HEK293 (cell line): ENCODE measurements at regions of chr6 and their contacts with region 1.

Region 1: DNA sequence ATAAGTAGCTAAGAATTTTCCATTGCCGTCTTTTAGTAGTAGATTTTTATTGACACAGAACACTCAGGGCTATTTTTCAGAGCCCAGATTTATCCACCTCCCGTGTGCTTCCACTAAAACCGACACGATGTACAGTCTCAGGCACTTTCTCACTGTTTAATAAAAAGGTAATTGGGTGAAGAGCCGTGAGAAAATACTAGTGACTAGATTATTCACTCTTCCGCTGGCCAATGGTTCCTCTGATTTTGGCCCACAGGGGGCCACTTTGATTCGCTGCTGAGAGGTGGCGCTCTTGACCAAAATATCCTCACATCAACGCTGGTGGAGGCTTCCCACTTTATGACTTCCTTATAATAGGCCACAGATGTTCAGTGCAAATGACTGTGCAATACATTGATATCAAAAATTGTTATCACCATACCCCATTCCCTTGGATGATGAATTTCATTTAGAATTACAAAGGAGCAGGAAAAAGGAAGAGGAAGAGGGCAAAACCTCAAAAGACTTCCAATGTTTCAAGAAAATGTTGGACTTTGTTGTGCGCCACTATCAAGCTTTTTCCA is 12.3 kb upstream of the HDDC2 start:
- H3K4me3 ChIP-seq: no peak overlapping the region
- H3K27ac ChIP-seq: no peak overlapping the region
- H3K4me1 ChIP-seq: no peaks in the 10 kb centered on the region
- CTCF ChIP-seq: peak; percentile 87

Region 2: DNA sequence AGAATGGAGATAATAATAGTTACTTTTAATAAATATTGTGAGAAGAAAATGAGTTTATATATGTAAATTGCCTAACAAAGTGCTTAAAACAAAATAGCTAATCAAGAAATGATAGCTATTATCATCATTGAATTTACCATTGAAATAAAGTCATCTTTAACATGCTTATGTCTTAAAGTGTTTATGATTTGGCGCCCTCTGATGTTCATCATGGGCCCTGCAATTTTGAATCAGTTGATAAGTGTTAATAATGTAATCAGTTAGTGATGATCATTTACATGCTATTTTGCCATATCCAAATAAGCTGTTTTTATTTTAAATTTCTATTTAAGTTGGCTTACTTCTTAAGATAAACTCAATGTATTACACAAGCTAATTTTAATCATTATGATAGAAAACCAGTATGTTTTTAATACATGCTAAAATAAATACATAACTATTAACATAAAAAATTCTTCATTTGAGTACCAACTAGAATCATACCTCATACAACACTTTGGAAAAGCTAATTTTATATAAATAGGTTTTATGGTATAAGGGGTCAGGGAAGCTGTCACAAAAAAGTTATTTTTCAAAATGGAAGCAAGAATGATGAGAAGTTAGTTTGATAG is 199.7 kb before region 1 on chr6:
- CTCF ChIA-PET with region 1: interaction called, 16 read pairs
- POLR2A ChIA-PET with region 1: no interaction called
- H3K4me3 ChIP-seq: no peak overlapping the region
- H3K27ac ChIP-seq: no peak overlapping the region
- H3K4me1 ChIP-seq: no peaks in the 10 kb centered on the region
- CTCF ChIP-seq: no peak

Region 3: DNA sequence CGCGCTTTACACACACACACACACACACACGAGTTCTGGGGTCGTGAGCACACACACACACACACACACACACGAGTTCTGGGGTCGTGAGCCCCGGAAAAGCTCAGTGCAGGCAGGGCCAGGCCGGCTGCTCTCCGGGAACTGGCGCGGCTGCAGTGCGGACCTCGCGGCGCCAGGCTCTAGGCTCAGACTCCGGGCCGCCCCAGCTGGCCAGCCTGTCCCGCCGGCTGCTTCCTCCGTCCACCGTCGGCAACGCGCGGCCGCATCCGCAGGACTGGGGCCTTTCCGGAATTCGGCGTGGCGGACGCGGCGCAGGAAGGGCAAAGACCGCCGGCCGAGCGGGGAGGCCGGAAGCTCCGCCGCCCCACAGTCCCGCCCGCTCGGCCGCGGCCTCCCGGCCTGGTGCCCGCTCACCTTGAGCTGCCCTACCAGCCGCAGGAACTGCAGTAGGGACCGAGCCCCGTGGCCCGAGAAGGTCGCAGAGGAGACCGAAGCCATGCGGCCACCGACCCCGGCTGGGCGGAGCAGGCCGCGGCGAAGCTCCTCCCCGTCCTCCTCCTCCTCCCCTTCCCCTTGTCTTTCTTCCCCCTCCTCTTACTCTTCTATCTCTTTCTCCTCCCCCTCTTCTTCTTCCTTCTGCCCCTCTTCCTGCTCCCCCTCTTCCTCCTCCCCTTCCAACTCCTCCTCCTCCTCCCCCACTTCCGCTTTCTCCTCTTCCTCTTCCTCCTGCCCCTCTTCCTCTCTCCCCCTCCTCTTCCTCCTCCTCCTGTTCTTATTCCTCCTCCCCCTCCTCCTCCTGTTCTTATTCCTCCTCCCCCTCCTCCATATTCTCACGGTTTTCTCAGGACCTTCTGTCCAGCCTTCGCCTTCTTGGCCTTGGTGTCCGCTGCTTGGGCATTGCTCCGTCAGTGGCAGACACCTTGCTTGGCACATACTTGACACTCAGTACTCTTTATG is 12.4 kb before region 1 on chr6 and contains the start of gene HDDC2:
- CTCF ChIA-PET with region 1: interaction called, 11 read pairs
- POLR2A ChIA-PET with region 1: no interaction called
- H3K4me3 ChIP-seq: peak within 1 kb of the TSS; percentile 89
- H3K27ac ChIP-seq: peak within 1 kb of the TSS; percentile 90
- H3K4me1 ChIP-seq: no peaks in the 10 kb centered on the region
- CTCF ChIP-seq: no peak; the same call in 1 of the 2 replicates

Region 4: DNA sequence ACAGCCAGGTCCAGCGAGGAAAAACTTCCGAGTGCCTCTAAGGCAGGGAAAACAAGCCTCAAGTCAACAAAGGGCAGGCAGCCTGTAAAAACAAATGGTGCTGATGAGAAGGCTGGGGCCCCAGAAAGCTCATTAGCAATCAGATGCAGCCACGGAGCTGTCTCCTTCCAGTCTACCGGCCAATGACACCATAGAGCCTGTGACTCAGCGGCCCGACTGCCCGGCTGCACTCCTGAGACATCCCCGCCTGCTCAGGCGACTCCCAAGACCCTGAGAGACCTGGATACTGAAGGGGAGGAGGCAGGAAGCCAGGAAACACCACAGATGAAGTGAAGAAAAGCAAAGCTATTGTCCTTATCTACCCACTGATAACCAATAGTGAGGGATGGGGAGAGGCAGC is 107.8 kb after region 1 on chr6:
- CTCF ChIA-PET with region 1: interaction called, 12 read pairs
- POLR2A ChIA-PET with region 1: no interaction called
- H3K4me3 ChIP-seq: no peak overlapping the region
- H3K27ac ChIP-seq: no peak overlapping the region
- H3K4me1 ChIP-seq: peaks cover 5% of the 10 kb centered on the region; the same call in 1 of the 2 replicates
- CTCF ChIP-seq: no peak

Region 5: DNA sequence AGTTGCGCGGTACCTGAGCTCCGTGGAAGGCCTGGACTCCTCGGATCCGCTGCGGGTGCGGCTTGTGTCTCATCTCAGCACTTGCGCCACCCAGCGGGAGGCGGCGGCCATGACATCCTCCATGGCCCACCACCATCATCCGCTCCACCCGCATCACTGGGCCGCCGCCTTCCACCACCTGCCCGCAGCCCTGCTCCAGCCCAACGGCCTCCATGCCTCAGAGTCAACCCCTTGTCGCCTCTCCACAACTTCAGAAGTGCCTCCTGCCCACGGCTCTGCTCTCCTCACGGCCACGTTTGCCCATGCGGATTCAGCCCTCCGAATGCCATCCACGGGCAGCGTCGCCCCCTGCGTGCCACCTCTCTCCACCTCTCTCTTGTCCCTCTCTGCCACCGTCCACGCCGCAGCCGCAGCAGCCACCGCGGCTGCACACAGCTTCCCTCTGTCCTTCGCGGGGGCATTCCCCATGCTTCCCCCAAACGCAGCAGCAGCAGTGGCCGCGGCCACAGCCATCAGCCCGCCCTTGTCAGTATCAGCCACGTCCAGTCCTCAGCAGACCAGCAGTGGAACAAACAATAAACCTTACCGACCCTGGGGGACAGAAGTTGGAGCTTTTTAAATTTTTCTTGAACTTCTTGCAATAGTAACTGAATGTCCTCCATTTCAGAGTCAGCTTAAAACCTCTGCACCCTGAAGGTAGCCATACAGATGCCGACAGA is 445.2 kb after region 1 on chr6:
- CTCF ChIA-PET with region 1: interaction called, 201 read pairs
- POLR2A ChIA-PET with region 1: no interaction called
- H3K4me3 ChIP-seq: no peak overlapping the region
- H3K27ac ChIP-seq: no peak overlapping the region
- H3K4me1 ChIP-seq: no peaks in the 10 kb centered on the region
- CTCF ChIP-seq: no peak

Region 6: GRCh38 chr6:125974214-125974866 is 660.2 kb after region 1 on chr6:
- CTCF ChIA-PET with region 1: interaction called, 21 read pairs
- POLR2A ChIA-PET with region 1: no interaction called
- H3K4me3 ChIP-seq: no peak overlapping the region
- H3K27ac ChIP-seq: no peak overlapping the region
- H3K4me1 ChIP-seq: no peaks in the 10 kb centered on the region
- CTCF ChIP-seq: no peak